MCF 10A (cell line): ENCODE measurements at regions of chr21 and their contacts with region 1.

Region 1: DNA sequence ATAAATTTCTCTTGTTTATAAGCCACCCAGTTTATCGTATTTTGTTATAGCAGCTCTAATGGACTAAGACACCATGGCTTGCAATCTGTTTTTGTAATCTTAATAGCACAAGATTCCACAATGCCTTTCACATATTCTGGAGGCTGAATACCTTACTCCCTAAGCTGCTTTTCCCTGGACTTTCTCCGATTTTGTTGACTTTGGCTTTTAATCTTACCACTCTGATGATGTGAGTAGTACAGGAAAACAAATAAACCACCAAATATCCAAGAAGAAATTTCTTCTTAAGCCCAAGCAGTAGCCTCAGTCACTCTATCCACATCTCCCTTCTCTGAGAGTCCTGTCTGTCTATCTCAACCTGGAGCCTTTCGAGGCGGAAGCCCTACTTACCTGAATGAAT is 838.6 kb downstream of the LTN1 start:
- DNase-seq: peak; percentile 24
- H3K4me3 Mint-ChIP-seq: no peak overlapping the region
- H3K27ac Mint-ChIP-seq: no peak overlapping the region
- H3K4me1 Mint-ChIP-seq: peaks cover 5% of the 10 kb centered on the region
- H3K27me3 Mint-ChIP-seq: no peaks in the 10 kb centered on the region
- CTCF ChIP-seq: no peak

Region 2: DNA sequence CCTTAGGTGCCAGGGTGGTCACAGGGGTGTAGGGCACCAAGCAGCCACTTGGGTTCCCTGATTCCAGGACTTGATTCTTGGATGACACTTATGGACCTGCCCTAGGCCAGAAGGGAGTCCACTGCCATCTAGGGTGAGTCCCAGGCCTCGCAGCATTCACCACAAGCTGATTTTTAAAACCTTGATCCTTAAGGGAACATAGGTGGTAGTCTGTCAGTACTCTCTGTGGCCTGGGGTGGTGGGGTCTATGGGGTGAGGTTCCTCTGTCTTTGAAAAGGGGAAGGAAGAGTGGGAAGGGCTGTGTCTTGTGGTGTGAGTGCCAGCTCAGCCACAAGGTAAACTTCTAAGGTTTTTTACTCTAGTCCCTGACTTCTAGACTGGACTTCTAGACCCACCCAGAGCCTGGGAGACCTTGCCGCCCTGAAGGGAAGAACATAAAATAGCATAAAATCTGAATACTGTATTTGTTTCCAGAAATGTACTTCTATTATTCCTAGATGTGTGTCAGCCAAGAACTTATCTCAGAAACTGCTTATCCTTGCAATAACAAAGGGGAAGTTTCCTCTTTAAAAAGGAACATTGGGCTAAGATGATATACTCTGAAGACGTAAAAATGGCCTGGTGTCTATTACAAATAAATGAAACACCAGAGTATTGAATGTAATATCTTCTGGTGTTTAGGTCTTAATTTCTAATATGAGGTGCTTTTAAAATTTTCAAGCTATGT is 81.2 kb after region 1 on chr21:
- CTCF ChIA-PET with region 1: no interaction called
- POLR2A ChIA-PET with region 1: no interaction called
- intact Hi-C with region 1: loop called (anchors 10 kb)
- DNase-seq: peak; percentile 9
- H3K4me3 Mint-ChIP-seq: no peak overlapping the region
- H3K27ac Mint-ChIP-seq: no peak overlapping the region
- H3K4me1 Mint-ChIP-seq: peaks cover 16% of the 10 kb centered on the region
- H3K27me3 Mint-ChIP-seq: no peaks in the 10 kb centered on the region
- CTCF ChIP-seq: no peak

Region 3: DNA sequence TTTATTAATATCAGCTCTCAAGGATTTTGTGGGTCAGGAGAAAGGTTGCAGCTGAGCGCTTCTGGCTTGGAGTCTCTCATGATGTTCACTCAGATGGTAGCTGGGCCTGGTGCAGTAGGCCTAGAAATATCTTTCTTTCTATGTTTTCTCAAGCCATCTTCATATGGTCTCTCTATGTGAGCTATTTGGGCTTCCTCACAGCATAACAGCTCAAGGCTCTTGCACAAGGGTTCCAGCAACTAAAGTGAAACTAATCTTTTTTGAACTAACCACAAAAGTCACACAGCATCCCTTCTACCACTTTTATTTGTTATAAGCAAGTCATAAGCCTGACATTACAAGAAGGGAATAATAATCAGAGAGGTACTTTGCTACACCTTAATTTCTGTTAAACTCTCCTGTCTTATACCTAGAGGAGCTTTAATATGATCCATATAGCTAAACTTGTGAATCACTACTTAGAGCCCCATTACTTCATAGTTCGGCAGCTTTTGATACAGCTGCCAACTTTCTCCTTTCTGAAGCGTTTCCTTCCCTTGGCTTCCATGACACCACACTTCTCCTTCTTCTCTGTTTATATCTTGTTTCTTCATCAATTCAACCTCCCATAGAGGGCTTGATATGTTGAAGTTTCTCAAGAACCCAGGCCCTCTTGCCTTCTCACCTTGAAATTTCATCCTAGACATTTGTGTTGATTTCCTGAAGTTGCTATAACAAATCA is 118.3 kb after region 1 on chr21:
- CTCF ChIA-PET with region 1: no interaction called
- POLR2A ChIA-PET with region 1: no interaction called
- intact Hi-C with region 1: no loop called
- DNase-seq: no peak
- H3K4me3 Mint-ChIP-seq: no peak overlapping the region
- H3K27ac Mint-ChIP-seq: no peak overlapping the region
- H3K4me1 Mint-ChIP-seq: no peaks in the 10 kb centered on the region
- H3K27me3 Mint-ChIP-seq: no peaks in the 10 kb centered on the region
- CTCF ChIP-seq: no peak

Region 4: DNA sequence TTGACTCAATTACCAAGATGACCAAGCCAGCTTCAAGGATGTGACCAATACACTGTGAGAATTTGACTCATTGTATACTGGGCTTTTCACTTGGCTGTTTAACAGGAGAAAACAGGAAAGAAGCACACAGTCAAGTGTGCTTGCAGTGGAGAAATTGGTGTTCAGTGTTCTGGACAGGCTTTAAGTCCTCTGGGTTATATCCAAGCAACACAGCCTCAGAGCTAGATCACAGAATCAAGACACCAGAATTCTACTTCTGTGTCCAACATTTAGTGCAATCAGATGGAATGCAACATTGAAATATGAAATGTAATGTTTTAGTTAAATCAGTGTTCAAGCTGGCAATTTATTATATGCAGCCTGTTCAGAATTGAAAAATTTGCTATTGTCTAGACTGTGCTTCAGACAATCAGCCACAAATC is 144.1 kb after region 1 on chr21:
- CTCF ChIA-PET with region 1: no interaction called
- POLR2A ChIA-PET with region 1: no interaction called
- intact Hi-C with region 1: no loop called
- DNase-seq: no peak
- H3K4me3 Mint-ChIP-seq: no peak overlapping the region
- H3K27ac Mint-ChIP-seq: no peak overlapping the region
- H3K4me1 Mint-ChIP-seq: no peaks in the 10 kb centered on the region
- H3K27me3 Mint-ChIP-seq: no peaks in the 10 kb centered on the region
- CTCF ChIP-seq: no peak